CD8-positive, alpha-beta T cell (primary cell): ENCODE measurements at regions of chr3 and their contacts with region 1.

Region 1: GRCh38 chr3:101827211-101828174 is 21.8 kb upstream of the NFKBIZ start:
- DNase-seq: peak; percentile 54 to 92 (median 79)
- ATAC-seq: peak; percentile 84
- H3K4me3 ChIP-seq: peak overlapping the region; percentile 61 to 65
- H3K4me3 Mint-ChIP-seq: peak overlapping the region; percentile 94
- H3K27ac ChIP-seq: peak overlapping the region; percentile 72 to 90
- H3K27ac Mint-ChIP-seq: peak overlapping the region; percentile 98
- H3K4me1 ChIP-seq: peaks cover 35% of the 10 kb centered on the region
- H3K4me1 Mint-ChIP-seq: peaks cover 61% of the 10 kb centered on the region
- H3K27me3 ChIP-seq: no peaks in the 10 kb centered on the region
- H3K27me3 Mint-ChIP-seq: no peaks in the 10 kb centered on the region
- CTCF ChIP-seq: no peak

Region 2: GRCh38 chr3:101861212-101861788 is 33.8 kb after region 1 on chr3:
- CTCF ChIA-PET with region 1: interaction called, 6 read pairs
- POLR2A ChIA-PET with region 1: no interaction called
- intact Hi-C with region 1: loop called in 1 of 2 experiments (anchors 5 kb)
- DNase-seq: peak in 1 of 9 experiments; percentile 30
- ATAC-seq: peak; percentile 15
- H3K4me3 ChIP-seq: no peak overlapping the region
- H3K4me3 Mint-ChIP-seq: no peak overlapping the region
- H3K27ac ChIP-seq: no peak overlapping the region
- H3K27ac Mint-ChIP-seq: peak overlapping the region; percentile 14
- H3K4me1 ChIP-seq: peaks cover 6% of the 10 kb centered on the region
- H3K4me1 Mint-ChIP-seq: peaks cover 26% of the 10 kb centered on the region
- H3K27me3 ChIP-seq: no peaks in the 10 kb centered on the region
- H3K27me3 Mint-ChIP-seq: no peaks in the 10 kb centered on the region
- CTCF ChIP-seq: no peak

Region 3: DNA sequence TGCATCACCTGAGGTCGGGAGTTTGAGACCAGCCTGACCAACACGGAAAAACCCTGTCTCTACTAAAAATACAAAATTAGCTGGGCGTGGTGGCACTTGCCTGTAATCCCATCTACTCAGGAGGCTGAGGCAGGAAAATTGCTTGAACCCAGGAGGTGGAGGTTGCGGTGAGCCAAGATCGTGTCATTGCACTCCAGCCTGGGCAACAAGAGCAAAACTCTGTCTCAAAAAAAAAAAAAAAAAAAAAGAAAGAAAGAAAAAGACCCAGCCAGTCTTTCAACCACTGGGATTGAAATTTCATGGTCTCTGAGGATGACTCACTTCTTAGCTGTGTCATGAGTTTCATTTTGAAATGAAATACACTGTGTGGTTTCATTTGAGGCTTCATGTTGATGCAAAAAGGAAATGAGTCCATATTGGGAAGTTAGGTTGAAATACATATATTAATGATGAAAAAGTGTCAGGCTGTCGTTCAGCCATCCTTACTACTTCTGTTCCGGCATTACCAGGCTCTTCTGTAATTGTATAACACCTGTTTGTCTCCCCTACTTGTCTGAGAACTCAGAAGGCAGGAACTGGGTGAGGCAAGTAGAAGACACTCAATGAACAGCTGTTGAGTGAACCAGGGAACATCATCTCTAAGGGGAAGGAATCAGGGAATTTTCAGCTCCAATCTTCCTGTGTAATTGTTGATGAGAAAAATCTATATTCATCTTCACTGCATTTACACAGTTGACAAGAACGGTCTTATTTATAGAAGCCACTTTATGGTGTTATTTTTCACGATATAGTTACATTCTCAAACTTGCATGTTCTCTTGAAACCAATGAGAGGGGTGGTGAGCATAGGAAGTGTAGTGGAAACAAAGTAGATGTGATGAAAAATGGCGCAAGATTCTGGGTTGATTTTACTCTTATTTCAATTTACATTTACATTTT is 109.2 kb after region 1 on chr3:
- CTCF ChIA-PET with region 1: no interaction called
- POLR2A ChIA-PET with region 1: no interaction called
- intact Hi-C with region 1: loop called in 1 of 2 experiments (anchors 5 kb)
- DNase-seq: peak in 5 of 9 experiments; percentile 8 to 82 (median 31)
- ATAC-seq: peak; percentile 93
- H3K4me3 ChIP-seq: peak overlapping the region in 1 of 2 experiments; percentile 9
- H3K4me3 Mint-ChIP-seq: peak overlapping the region; percentile 45
- H3K27ac ChIP-seq: no peak overlapping the region
- H3K27ac Mint-ChIP-seq: peak overlapping the region; percentile 87
- H3K4me1 ChIP-seq: peaks cover 66% of the 10 kb centered on the region
- H3K4me1 Mint-ChIP-seq: peaks cover 22% of the 10 kb centered on the region
- H3K27me3 ChIP-seq: no peaks in the 10 kb centered on the region
- H3K27me3 Mint-ChIP-seq: no peaks in the 10 kb centered on the region
- CTCF ChIP-seq: no peak